H1 (cell line): ENCODE measurements at regions of chr6 and their contacts with region 1.

Region 1: GRCh38 chr6:78781001-78781400 is 86.3 kb upstream of the IRAK1BP1 start:
- DNase-seq: no peak
- H3K4me3 ChIP-seq: no peak overlapping the region
- H3K27ac ChIP-seq: no peak overlapping the region
- H3K4me1 ChIP-seq: no peaks in the 10 kb centered on the region
- H3K27me3 ChIP-seq: no peaks in the 10 kb centered on the region
- CTCF ChIP-seq: no peak
- EP300 ChIP-seq: no peak
- POLR2A ChIP-seq: no peak
- RAD21 ChIP-seq: no peak

Region 2: GRCh38 chr6:78770766-78771165 is 10.2 kb before region 1 on chr6:
- CTCF ChIA-PET with region 1: interaction called, 14 read pairs
- POLR2A ChIA-PET with region 1: no interaction called
- DNase-seq: no peak
- H3K4me3 ChIP-seq: no peak overlapping the region
- H3K27ac ChIP-seq: no peak overlapping the region
- H3K4me1 ChIP-seq: no peaks in the 10 kb centered on the region
- H3K27me3 ChIP-seq: no peaks in the 10 kb centered on the region
- CTCF ChIP-seq: peak in 2 of 3 experiments; percentile 12 to 48; a peak in 2 of 4 replicates
- EP300 ChIP-seq: no peak
- POLR2A ChIP-seq: no peak
- RAD21 ChIP-seq: peak; percentile 58 to 63

Region 3: GRCh38 chr6:78942446-78942845 is 161.4 kb after region 1 on chr6:
- CTCF ChIA-PET with region 1: no interaction called
- POLR2A ChIA-PET with region 1: no interaction called
- DNase-seq: no peak
- H3K4me3 ChIP-seq: no peak overlapping the region
- H3K27ac ChIP-seq: no peak overlapping the region
- H3K4me1 ChIP-seq: no peaks in the 10 kb centered on the region
- H3K27me3 ChIP-seq: no peaks in the 10 kb centered on the region
- CTCF ChIP-seq: no peak
- EP300 ChIP-seq: no peak
- POLR2A ChIP-seq: no peak
- RAD21 ChIP-seq: no peak